Activated CD4-positive, alpha-beta T cell treated with anti-CD3 and anti-CD28 coated beads for 36 hours (primary cell): ENCODE measurements at regions of chr19 and their contacts with region 1.

Region 1: GRCh38 chr19:49766007-49766937 is 529 bp upstream of the AP2A1 start:
- DNase-seq: peak; percentile 99
- ATAC-seq: peak; percentile 93
- H3K4me3 Mint-ChIP-seq: peak overlapping the region; percentile 94
- H3K27ac Mint-ChIP-seq: peak overlapping the region; percentile 93
- H3K4me1 Mint-ChIP-seq: peaks cover 36% of the 10 kb centered on the region
- H3K27me3 Mint-ChIP-seq: no peaks in the 10 kb centered on the region

Region 2: DNA sequence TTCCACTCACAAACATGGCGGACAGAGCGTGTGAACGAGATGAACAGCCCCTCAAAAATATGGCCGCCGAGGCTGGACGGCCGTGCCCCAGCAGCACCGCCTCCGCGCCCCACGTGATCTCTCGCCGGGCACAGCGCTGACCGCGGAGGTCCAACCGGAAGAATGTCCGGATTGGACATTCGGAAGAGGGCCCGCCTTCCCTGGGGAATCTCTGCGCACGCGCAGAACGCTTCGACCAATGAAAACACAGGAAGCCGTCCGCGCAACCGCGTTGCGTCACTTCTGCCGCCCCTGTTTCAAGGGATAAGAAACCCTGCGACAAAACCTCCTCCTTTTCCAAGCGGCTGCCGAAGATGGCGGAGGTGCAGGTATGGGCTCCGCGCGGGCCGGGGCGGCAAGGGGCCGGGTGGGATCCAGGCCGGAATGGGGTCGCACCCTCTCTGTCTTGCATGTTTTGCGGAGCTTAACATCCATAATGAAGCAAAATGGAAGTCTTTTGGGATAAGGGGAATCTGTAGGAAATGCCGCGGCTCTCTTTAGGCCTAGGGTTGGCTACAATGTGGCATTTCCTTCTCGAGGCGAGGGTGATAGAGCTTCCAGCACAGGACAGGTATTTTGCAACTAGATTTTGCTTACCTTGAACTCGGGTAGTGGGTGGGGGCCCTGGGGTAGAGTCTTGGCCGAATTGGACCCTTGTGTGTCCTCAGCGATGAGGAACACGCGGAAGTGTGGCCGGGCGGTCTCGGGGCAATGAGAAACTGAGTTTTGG is 278.8 kb before region 1 on chr19 and contains the start of gene RPL13A:
- CTCF ChIA-PET with region 1: no interaction called
- POLR2A ChIA-PET with region 1: no interaction called
- intact Hi-C with region 1: loop called in 1 of 2 experiments (anchors 1 kb)
- DNase-seq: peak; percentile 100
- ATAC-seq: peak; percentile 90
- H3K4me3 Mint-ChIP-seq: peak within 1 kb of the TSS; percentile 99
- H3K27ac Mint-ChIP-seq: peak within 1 kb of the TSS; percentile 97
- H3K4me1 Mint-ChIP-seq: peaks cover 26% of the 10 kb centered on the region
- H3K27me3 Mint-ChIP-seq: no peaks in the 10 kb centered on the region
- total RNA-seq, gene RPL13A: 3,861 to 3,967 TPM

Region 3: DNA sequence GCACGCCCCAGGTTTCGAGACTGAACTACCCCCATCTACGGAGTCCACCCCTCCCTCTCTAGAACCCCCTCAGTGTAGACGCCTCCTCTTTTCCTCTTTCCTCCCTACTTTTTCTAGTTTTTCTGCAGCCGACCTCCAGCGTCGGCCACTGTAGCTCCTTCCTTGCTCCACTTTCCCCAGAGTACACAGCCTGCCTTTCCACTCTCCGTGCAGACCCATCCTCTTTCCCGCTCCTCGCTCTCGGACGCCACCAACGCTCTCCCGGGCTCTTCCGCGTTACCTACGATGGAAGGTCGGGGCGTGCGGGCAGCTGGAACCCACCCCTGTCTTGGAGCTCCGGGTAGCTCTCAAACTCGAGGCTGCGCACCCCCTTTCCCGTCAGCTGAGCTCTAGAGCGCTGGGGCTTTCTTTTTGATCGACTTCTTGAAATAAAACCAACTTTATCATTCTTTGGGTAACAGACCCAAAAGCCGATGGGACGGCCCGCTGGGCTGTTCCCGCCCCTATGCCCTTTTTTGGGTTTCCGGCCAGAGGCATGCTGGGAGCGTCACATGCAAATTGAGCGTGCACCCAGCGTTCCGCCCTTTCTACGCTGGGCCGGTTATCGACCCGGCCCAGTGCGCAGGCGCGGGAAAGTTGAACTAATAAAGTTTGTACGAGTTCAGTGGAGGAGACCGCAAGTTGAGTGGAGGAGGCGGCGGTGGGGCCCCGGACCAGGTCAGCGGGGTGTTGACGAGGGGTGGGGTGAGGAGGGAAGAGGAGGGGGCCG is 100.7 kb before region 1 on chr19 and contains the starts of genes BCL2L12 and IRF3:
- CTCF ChIA-PET with region 1: no interaction called
- POLR2A ChIA-PET with region 1: no interaction called
- intact Hi-C with region 1: loop called in 1 of 2 experiments (anchors 1 kb)
- DNase-seq: peak; percentile 100
- ATAC-seq: peak; percentile 86
- H3K4me3 Mint-ChIP-seq: peak within 1 kb of the TSS; percentile 96
- H3K27ac Mint-ChIP-seq: peak within 1 kb of the TSS; percentile 92
- H3K4me1 Mint-ChIP-seq: peaks cover 29% of the 10 kb centered on the region
- H3K27me3 Mint-ChIP-seq: no peaks in the 10 kb centered on the region
- total RNA-seq, gene BCL2L12: 79.6 to 93.8 TPM
- total RNA-seq, gene IRF3: 123 to 125 TPM

Region 4: GRCh38 chr19:49727217-49728030 is 38.8 kb before region 1 on chr19:
- CTCF ChIA-PET with region 1: no interaction called
- POLR2A ChIA-PET with region 1: no interaction called
- intact Hi-C with region 1: no loop called
- DNase-seq: no peak
- ATAC-seq: no peak
- H3K4me3 Mint-ChIP-seq: no peak overlapping the region
- H3K27ac Mint-ChIP-seq: no peak overlapping the region
- H3K4me1 Mint-ChIP-seq: no peaks in the 10 kb centered on the region
- H3K27me3 Mint-ChIP-seq: no peaks in the 10 kb centered on the region

Region 5: DNA sequence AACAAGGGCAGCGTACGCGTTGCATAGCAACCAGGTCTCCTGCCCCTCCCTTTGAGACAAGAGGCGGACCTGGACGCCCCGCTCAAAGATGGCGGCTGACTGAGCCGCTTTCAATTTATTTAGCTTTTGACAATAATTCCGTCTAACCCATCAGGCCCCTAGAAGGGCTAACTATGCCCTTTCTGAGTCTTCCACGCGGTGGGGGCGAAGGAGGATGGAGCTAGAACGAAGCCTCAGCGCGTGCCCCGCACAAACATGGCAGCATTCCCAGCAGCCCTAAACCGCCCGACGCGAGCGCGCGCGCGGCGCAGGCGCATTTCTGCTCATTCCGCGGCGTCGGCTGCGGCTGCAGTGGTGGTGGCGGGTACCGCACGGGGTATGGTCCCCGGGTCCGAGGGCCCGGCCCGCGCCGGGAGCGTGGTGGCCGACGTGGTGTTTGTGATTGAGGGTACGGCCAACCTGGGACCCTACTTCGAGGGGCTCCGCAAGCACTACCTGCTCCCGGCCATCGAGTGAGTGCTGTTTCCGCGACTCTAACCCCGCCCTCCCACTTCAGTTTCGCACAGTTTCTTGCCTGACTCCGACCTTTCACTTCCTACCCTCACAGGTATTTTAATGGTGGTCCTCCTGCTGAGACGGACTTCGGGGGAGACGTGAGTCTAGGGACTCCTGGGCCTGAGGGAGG is 51.8 kb after region 1 on chr19 and contains the start of gene MED25:
- CTCF ChIA-PET with region 1: no interaction called
- POLR2A ChIA-PET with region 1: no interaction called
- intact Hi-C with region 1: loop called (anchors 1 kb)
- DNase-seq: peak; percentile 91
- ATAC-seq: peak; percentile 75
- H3K4me3 Mint-ChIP-seq: peak within 1 kb of the TSS; percentile 87
- H3K27ac Mint-ChIP-seq: peak within 1 kb of the TSS; percentile 99
- H3K4me1 Mint-ChIP-seq: peaks cover 26% of the 10 kb centered on the region
- H3K27me3 Mint-ChIP-seq: no peaks in the 10 kb centered on the region
- total RNA-seq, gene MED25: 39.6 to 49.9 TPM

Region 6: DNA sequence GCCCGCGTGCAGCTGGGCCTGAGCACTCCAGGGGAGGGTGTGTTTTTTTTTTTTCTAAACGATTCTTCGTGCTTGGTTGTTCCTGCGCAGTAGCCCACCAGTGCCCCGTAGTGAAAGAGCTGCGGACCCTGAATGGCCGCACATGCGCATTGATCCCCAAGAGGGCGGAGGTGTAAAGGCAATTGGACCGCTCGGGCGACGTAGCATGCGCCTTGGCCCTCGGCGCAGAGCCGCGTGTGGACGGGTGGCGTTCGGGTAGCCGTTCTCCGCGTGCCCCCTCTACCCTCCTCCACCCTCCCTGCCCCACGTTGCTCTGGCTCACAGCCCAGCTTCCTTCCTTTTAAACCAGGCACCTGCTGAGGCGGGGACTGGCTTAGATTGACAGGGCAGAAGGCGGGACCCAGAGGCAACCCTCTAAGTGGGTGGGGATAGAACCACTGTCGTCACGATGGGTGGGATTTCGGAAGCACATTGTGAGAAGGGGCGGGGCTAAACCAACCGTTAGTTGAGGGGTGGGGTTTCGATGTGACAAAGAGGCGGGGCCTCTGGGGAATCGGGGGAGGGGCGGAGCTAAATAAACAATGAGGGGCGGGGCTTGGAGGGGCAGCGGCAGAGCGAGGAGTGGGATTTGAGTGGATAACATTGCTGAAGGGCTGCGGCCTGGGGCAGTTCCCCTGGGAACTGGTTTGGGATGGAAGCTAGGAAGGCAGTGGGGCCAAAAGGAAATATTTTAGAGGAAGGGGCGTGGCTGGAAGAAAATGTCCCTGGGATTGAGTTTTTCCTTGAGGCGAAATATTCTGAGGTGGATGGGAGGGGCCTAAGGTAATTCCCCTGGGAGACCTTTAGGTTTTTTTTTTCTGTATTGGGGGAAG is 163.6 kb after region 1 on chr19:
- CTCF ChIA-PET with region 1: no interaction called
- POLR2A ChIA-PET with region 1: no interaction called
- intact Hi-C with region 1: loop called in 1 of 2 experiments (anchors 1 kb)
- DNase-seq: peak; percentile 97
- ATAC-seq: peak; percentile 91
- H3K4me3 Mint-ChIP-seq: peak overlapping the region; percentile 96
- H3K27ac Mint-ChIP-seq: peak overlapping the region; percentile 98
- H3K4me1 Mint-ChIP-seq: peaks cover 59% of the 10 kb centered on the region
- H3K27me3 Mint-ChIP-seq: no peaks in the 10 kb centered on the region